Ovary (tissue), 10 donors: ENCODE measurements at regions of chr4 and their contacts with region 1.

Region 1: GRCh38 chr4:453267-453666 is 45.7 kb downstream of the ZNF721 start:
- DNase-seq: no peak
- H3K4me3 ChIP-seq: no peak overlapping the region
- H3K27ac ChIP-seq: no peak overlapping the region
- H3K4me1 ChIP-seq: no peaks in the 10 kb centered on the region
- H3K27me3 ChIP-seq: no peaks in the 10 kb centered on the region
- CTCF ChIP-seq: no peak
- EP300 ChIP-seq: no peak
- POLR2A ChIP-seq: no peak

Region 2: DNA sequence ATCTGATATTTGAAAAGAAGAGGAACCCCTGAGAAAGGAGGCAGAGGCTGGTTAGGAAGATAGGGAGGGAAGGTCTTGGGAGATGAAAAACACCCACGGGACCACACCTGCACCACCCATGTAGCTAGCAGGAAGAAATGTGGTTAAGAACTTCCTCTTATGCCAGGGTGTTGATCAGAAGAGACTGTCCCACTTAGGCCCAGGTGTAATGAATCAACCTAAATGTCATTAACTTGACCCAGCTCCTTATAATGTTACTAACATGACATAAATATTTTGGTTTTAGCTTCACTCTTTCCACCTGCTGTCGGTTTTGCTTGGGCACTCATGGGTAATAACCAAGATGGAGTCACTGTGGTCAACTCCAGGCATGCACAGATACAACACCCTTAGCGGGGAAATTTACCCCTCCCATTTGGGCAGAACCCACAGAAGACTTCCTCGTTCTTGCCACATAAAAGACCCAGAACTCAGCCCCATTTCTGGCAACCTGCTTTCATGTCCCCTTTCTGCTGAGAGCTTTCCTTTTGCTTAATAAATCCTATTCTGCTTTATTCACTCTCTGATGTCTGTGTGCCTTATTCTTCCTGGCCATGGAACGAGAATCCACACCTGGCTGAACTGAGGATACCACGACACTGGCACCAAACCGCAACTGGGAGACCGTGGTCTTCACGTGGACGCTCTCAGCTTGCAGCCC is 68.8 kb before region 1 on chr4:
- intact Hi-C with region 1: loop called in 1 of 4 experiments (anchors 10 kb)
- DNase-seq: no peak
- H3K4me3 ChIP-seq: no peak overlapping the region
- H3K27ac ChIP-seq: no peak overlapping the region
- H3K4me1 ChIP-seq: no peaks in the 10 kb centered on the region
- H3K27me3 ChIP-seq: no peaks in the 10 kb centered on the region
- CTCF ChIP-seq: no peak
- EP300 ChIP-seq: no peak
- POLR2A ChIP-seq: no peak

Region 3: GRCh38 chr4:1026115-1026514 is 572.8 kb after region 1 on chr4:
- intact Hi-C with region 1: no loop called
- DNase-seq: no peak
- H3K4me3 ChIP-seq: no peak overlapping the region
- H3K27ac ChIP-seq: no peak overlapping the region
- H3K4me1 ChIP-seq: peaks cover 9% of the 10 kb centered on the region
- H3K27me3 ChIP-seq: no peaks in the 10 kb centered on the region
- CTCF ChIP-seq: no peak
- EP300 ChIP-seq: no peak
- POLR2A ChIP-seq: no peak